ENCODE measurements at regions of chr1 and their contacts with region 1.

Region 1: DNA sequence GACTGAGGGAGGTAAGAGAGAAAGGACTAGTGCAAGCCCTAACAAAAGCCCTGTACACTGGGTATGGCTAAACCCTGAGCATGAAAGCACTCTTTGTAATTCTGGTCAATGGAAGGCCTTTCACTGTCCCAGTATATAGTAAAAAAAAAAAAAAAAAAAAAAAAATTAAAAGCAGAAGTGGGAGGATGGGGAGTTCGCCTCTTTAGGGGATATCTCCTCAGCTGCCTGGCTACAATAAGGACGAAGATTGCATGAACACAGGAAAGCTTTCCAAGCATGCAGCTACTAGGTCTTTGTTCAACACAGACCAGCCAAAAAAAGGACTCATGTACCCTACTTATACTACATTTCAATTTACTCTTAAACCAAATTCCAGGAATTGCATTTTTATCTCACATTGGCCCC is 59.1 kb downstream of the EIF4G3 start:
- DNase-seq: no peak
- ATAC-seq: peak; percentile 52 to 68
- H3K4me3 ChIP-seq: no peak overlapping the region
- H3K27ac ChIP-seq: no peak overlapping the region
- H3K4me1 ChIP-seq: peaks cover 1% of the 10 kb centered on the region
- H3K27me3 ChIP-seq: no peaks in the 10 kb centered on the region

Region 2: GRCh38 chr1:20589331-20590278 is 528.0 kb before region 1 on chr1:
- intact Hi-C with region 1: no loop called
- DNase-seq: peak; percentile 80 to 83 (median 81)
- ATAC-seq: peak; percentile 66 to 78
- H3K4me3 ChIP-seq: peak overlapping the region; percentile 2
- H3K27ac ChIP-seq: peak overlapping the region; percentile 52
- H3K4me1 ChIP-seq: peaks cover 3% of the 10 kb centered on the region
- H3K27me3 ChIP-seq: no peaks in the 10 kb centered on the region

Region 3: GRCh38 chr1:21184276-21184675 is 66.7 kb after region 1 on chr1:
- intact Hi-C with region 1: loop called in 1 of 4 experiments (anchors 10 kb)
- DNase-seq: no peak
- ATAC-seq: peak; percentile 41 to 47
- H3K4me3 ChIP-seq: no peak overlapping the region
- H3K27ac ChIP-seq: no peak overlapping the region
- H3K4me1 ChIP-seq: no peaks in the 10 kb centered on the region
- H3K27me3 ChIP-seq: no peaks in the 10 kb centered on the region